ENCODE measurements at regions of chr22 and their contacts with region 1.

Region 1: GRCh38 chr22:22710719-22711531 is 66.5 kb downstream of the GGTLC2 start:
- H3K4me3 ChIP-seq: no peak overlapping the region
- H3K27ac ChIP-seq: no peak overlapping the region
- H3K4me1 ChIP-seq: no peaks in the 10 kb centered on the region
- CTCF ChIP-seq: peak; percentile 56; the same call in 1 of the 2 replicates

Region 2: DNA sequence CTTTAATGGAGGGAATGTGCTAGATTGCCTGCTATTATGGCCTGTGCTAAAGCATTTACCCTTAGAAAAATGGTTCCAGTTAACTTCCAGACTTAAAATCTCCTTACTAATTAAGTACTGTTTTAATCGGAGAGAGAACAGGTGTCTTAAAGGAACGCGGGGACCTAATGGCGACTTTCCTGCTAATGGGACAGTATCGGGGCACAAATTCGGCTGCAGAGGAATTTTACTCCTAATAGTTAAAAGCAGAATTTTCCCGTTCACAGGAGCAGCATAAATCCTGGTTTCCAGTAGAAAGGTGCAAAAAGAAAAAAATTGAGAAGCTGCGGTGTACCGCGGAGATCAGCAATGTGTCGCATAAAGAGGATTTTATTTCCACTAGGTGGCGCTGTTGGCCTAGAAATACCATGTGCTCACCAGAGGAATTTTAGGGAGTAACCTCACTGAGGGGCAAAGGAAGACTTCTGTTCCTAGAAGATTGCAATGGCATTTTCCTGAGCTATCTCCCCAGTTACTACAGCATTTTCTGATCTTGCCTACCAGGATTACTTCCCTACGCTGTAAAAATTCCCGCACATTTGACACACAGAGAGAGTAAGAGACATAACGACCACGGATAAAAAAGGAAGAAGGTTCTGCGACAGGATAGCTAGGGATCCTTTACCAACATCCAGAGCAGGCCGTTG is 246.9 kb before region 1 on chr22:
- CTCF ChIA-PET with region 1: interaction called, 14 read pairs
- POLR2A ChIA-PET with region 1: no interaction called
- H3K4me3 ChIP-seq: no peak overlapping the region
- H3K27ac ChIP-seq: no peak overlapping the region
- H3K4me1 ChIP-seq: no peaks in the 10 kb centered on the region
- CTCF ChIP-seq: peak; percentile 77

Region 3: DNA sequence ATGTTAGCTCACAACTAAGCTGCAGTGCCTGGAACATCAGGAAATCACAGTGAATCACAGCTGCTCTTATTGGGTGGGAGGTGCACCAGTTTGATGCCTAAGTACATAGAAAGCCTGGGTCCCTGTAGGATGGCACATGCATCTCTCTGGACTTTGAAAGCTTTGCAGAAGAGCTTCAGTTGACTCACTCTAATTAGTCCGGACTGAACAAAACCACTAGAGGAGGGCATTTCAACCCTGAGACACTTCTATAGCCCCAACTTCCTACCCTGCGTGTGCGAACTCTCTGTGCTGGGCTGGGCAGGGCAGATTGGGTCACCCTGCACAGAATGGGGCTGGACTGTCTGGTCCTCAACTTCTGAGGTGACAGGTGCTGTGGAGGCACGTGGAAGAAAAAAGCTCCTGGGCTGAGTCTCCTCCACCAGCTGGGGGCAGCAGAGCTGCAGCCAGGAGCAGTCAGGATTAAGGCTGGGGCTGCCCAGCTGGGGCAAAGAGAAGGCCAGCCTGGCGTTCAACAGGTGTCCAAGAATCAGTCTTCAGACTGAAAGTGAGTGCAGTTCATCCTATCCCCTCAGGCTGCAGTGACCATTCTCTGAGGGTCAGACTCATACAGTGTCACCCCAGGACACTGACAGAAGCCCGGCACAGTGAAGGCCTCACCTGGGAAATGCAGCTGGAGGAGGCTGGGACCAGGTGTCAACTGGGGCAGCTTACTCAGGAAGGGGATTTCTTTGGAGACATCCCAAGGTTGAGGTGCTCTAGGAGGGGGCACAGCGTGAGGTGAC is 44.4 kb before region 1 on chr22:
- CTCF ChIA-PET with region 1: interaction called, 50 read pairs
- POLR2A ChIA-PET with region 1: no interaction called
- H3K4me3 ChIP-seq: no peak overlapping the region
- H3K27ac ChIP-seq: no peak overlapping the region
- H3K4me1 ChIP-seq: no peaks in the 10 kb centered on the region
- CTCF ChIP-seq: peak; percentile 65

Region 4: GRCh38 chr22:22687638-22688500 is 23.1 kb before region 1 on chr22:
- CTCF ChIA-PET with region 1: interaction called, 32 read pairs
- POLR2A ChIA-PET with region 1: interaction called, 3 read pairs
- H3K4me3 ChIP-seq: no peak overlapping the region
- H3K27ac ChIP-seq: no peak overlapping the region
- H3K4me1 ChIP-seq: no peaks in the 10 kb centered on the region
- CTCF ChIP-seq: peak; percentile 46; the same call in 1 of the 2 replicates

Region 5: DNA sequence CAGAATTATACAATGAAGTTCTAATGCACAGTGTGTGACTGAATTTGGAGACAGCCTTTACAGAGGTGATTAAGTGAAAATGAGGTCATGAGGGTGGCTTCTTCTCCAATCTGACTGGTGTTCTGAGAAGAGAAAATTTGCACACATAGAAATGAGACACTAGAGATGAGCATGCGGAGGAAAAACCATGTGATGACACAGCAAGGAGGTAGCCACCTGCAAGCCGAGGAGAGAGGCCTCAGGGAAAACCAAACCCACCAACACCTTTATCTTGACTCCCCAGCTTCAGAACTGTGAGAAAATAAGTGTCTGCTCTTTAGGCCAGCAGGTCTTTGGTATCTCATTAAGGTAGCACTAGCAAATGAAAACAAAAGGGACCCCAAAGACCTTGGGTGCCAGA is 26.7 kb after region 1 on chr22:
- CTCF ChIA-PET with region 1: interaction called, 36 read pairs
- POLR2A ChIA-PET with region 1: no interaction called
- H3K4me3 ChIP-seq: no peak overlapping the region
- H3K27ac ChIP-seq: no peak overlapping the region
- H3K4me1 ChIP-seq: no peaks in the 10 kb centered on the region
- CTCF ChIP-seq: no peak

Region 6: DNA sequence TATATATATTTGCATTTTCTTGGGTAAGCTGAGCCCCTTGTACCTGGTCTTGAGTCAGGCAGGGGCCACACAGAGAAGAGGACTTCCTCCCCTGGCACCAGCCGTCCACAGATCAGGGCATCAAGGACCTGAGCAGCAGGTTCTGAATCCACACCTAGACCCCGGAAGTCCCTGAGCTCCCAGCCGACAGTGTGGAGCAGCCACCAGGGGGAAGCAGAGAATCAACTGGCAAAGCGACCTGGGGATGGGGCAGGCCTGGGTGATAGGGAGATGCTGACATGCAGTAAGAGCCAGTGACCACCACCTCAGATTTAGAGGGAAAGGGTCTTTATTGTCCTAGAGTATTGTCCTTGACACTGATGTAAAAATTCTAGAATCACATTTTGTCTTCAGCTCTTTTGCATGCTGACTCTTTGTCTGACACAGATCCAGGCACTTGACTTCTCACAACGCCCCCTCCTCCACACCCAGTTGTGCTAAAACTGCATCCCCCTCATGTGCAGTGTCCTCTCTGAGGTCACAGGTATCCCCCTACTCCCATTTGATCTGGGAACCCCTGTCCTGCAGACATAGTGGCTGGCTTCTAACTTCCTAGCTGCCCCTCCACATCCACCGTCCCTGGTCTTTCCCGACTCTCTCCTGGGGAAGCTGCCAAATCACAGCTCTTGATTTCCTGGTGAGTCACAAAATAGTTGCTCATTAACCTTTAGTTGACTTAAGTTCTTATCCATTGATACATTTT is 42.8 kb after region 1 on chr22:
- CTCF ChIA-PET with region 1: interaction called, 21 read pairs
- POLR2A ChIA-PET with region 1: no interaction called
- H3K4me3 ChIP-seq: no peak overlapping the region
- H3K27ac ChIP-seq: no peak overlapping the region
- H3K4me1 ChIP-seq: no peaks in the 10 kb centered on the region
- CTCF ChIP-seq: peak; percentile 57; the same call in 1 of the 2 replicates